Posterior cingulate gyrus (tissue), 11 donors: ENCODE measurements at regions of chr5 and their contacts with region 1.

Region 1: DNA sequence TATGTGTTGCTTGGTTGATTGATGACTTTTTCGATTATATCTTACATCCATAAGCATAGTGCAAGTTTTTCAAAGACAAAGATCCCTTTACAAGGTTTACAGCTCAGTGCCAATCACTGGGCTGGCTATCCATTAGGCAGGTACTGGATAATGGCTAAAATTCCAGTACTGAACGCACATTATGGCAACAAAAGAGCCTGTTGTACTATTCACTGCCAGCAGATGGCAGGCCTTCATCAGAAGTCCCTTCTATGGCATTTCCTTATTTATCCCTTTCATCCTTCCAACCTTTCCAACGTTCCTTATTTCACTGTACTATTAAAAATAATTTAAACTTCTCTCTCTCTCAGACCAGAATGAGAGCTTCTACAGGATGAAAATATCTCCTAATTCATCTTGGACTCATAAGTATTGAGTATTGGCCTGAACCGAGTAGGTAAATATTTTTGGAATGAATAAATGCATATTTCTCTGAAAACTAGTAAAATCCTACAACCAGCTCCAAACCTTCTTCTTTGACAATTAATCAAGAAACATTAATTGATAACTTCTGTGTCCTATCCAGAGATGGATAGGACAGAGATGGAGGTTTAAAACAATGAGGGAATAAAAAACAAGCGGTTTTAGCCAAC is 6.7 kb upstream of the WNT8A start:
- DNase-seq: peak in 7 of 10 donors; percentile 17 to 88 (median 71)

Region 2: DNA sequence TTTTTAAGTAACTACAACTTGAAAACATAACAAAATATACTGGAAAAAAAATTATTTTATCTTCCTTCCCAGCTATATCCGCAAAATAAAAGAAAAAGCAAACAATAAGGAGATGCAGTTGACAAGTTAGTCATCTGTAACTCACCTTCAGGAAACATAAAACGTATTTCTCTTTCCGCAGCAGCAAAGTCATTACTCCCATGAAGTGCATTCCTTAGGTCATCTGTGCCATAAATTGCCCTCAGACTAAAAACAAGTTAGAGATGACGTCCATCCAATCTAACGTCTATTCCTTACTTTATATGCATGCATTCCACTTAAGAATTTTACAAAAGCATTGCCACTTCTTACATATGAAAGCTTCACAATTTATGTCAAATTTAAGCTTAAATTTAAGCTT is 51.2 kb after region 1 on chr5:
- intact Hi-C with region 1: loop called (anchors 1 kb)
- DNase-seq: no peak

Region 3: GRCh38 chr5:138185957-138186447 is 108.8 kb after region 1 on chr5:
- intact Hi-C with region 1: no loop called
- DNase-seq: no peak

Region 4: GRCh38 chr5:138523406-138523970 is 446.3 kb after region 1 on chr5:
- intact Hi-C with region 1: no loop called
- DNase-seq: no peak